HCT116 (cell line): ENCODE measurements at regions of chr7 and their contacts with region 1.

Region 1: DNA sequence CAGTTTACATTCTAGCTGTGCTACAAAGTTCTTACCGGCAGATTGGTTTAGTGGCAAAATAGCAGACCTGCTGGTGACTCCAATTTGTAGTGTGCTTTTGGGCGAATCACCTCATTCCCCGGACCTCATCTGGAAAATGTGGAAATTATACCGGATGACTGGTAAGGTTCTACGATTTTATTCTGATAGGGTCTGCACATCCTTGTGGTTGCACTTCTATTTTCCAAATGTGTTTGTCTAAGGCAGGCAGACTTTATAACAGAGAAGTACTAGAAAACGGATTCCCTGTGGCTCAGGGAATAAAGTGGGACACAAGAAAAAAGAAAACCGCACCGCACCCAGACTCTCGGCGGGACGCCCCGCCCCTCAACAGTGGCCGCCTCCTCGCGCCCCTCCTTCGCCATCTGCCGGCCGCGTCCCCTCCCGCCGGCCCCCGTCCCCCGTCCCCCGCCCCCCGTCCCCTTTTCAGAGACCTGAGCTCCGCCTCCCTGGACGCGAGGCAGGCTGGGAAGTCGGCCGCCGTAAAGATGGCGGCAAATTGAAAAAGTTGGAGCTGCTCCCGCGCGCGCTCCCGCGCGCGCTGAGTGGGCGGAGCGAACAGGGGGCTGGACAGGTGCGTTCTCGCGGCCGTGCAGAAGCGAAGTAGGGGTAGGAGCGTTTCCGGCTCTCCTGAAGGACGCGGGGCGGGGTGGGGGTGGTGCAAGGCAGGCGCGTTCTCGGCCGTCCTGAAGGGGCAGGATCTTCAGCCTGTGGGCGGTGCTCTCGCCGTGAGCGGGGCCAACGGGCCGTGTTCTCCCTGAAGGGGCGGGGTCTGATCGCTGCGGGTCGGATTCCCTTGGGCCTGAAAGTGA is 531 bp upstream of the CCM2 start:
- DNase-seq: peak; percentile 96
- ATAC-seq: peak; percentile 92
- H3K4me3 ChIP-seq: peak overlapping the region; percentile 53 to 73
- H3K27ac ChIP-seq: peak overlapping the region; percentile 55
- H3K4me1 ChIP-seq: peaks cover 0 to 19% of the 10 kb centered on the region in 2 experiments; a peak in 2 of 4 replicates
- H3K27me3 ChIP-seq: no peaks in the 10 kb centered on the region
- CTCF ChIP-seq: no peak
- POLR2A ChIP-seq: peak; percentile 41
- RAD21 ChIP-seq: no peak

Region 2: DNA sequence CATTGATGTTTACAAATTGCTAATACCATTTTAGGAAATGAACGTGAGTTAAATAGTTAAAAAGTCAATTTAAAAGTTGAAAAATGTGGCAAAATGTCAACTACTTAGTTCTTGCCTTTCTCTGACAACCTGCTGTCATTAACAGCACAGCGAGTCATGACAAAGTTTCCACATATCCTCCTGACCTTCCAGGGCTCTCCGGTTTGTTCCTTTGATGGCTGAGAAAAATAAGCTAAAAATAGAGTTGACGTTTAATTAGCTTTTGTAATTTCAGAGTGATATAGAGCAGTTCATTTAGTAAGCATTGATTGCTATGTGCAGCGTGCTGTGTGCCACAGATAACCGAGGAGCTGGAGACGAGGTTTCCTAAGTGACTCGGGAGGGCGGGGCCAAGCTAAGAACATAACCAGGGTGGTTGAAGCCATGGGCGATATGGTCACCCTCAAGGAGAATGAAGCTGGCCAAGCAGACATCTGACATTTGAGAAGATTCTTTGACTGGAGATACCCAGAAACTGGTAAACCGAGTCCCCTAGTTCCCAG is 345.1 kb before region 1 on chr7:
- CTCF ChIA-PET with region 1: no interaction called
- POLR2A ChIA-PET with region 1: no interaction called
- RAD21 ChIA-PET with region 1: no interaction called
- intact Hi-C with region 1: no loop called
- DNase-seq: no peak
- ATAC-seq: no peak
- H3K4me3 ChIP-seq: no peak overlapping the region
- H3K27ac ChIP-seq: no peak overlapping the region
- H3K4me1 ChIP-seq: peaks cover 0 to 4% of the 10 kb centered on the region in 2 experiments; a peak in 1 of 4 replicates
- H3K27me3 ChIP-seq: no peaks in the 10 kb centered on the region
- CTCF ChIP-seq: no peak
- POLR2A ChIP-seq: no peak
- RAD21 ChIP-seq: no peak

Region 3: DNA sequence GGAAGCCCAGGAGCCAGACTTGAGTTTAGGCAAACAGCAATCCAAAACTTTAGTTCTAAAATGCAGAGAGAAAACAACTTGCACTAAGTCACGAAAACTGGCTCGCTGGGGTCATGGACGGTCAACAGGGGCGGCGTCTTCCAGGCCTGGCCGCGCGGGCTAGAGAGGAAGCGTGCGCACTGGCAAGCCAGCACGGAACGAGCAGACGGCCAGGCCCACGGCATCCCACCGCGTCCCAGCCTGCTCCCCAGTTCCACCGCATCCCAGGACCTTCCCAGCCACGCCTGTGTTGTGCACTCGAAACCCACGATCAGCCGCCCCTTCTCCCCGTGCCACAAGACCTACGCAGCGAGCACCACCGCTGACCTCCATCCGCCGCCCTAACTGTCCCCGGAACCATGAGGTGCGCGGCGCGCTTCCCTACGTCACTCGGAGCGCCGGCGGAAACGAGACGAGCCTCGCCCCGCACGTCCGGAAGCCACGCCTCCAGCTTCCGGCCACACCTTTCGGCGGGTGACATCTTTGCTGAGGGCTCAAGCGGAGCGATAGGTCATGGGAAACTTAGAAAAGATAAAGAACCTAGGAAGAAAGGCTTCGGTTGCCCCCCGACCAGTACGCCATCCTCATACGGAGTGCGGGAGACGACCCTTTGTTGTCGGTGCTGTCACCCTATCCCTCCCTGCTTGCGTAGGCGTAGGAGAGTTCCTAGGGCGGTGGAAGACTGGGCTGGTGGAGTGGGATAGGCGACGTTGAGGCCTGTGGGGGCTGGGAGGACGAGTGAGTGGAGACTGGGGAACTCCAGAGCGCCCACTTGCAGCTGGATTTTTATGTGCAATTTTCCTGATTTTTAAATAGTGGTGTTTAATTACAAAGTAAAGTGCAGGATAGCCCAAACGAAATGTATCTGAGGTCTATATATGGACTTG is 112.1 kb after region 1 on chr7 and contains the start of gene TBRG4:
- CTCF ChIA-PET with region 1: no interaction called
- POLR2A ChIA-PET with region 1: no interaction called
- RAD21 ChIA-PET with region 1: no interaction called
- intact Hi-C with region 1: loop called (anchors 2 kb)
- DNase-seq: peak; percentile 89
- ATAC-seq: peak; percentile 90
- H3K4me3 ChIP-seq: peak within 1 kb of the TSS; percentile 89 to 100
- H3K27ac ChIP-seq: peak within 1 kb of the TSS; percentile 87
- H3K4me1 ChIP-seq: peaks cover 11 to 13% of the 10 kb centered on the region in 2 experiments
- H3K27me3 ChIP-seq: no peaks in the 10 kb centered on the region
- CTCF ChIP-seq: peak; percentile 15 to 40 (median 40); a peak in 5 of 6 replicates
- POLR2A ChIP-seq: peak; percentile 86
- RAD21 ChIP-seq: peak; percentile 53
- total RNA-seq, gene TBRG4: 136 TPM

Region 4: GRCh38 chr7:45359776-45360175 is 360.3 kb after region 1 on chr7:
- CTCF ChIA-PET with region 1: no interaction called
- POLR2A ChIA-PET with region 1: no interaction called
- RAD21 ChIA-PET with region 1: no interaction called
- intact Hi-C with region 1: no loop called
- DNase-seq: no peak
- ATAC-seq: no peak
- H3K4me3 ChIP-seq: no peak overlapping the region
- H3K27ac ChIP-seq: no peak overlapping the region
- H3K4me1 ChIP-seq: no peaks in the 10 kb centered on the region
- H3K27me3 ChIP-seq: peaks cover 70% of the 10 kb centered on the region
- CTCF ChIP-seq: no peak
- POLR2A ChIP-seq: no peak
- RAD21 ChIP-seq: no peak